ENCODE measurements at regions of chr5 and their contacts with region 1.

Region 1: DNA sequence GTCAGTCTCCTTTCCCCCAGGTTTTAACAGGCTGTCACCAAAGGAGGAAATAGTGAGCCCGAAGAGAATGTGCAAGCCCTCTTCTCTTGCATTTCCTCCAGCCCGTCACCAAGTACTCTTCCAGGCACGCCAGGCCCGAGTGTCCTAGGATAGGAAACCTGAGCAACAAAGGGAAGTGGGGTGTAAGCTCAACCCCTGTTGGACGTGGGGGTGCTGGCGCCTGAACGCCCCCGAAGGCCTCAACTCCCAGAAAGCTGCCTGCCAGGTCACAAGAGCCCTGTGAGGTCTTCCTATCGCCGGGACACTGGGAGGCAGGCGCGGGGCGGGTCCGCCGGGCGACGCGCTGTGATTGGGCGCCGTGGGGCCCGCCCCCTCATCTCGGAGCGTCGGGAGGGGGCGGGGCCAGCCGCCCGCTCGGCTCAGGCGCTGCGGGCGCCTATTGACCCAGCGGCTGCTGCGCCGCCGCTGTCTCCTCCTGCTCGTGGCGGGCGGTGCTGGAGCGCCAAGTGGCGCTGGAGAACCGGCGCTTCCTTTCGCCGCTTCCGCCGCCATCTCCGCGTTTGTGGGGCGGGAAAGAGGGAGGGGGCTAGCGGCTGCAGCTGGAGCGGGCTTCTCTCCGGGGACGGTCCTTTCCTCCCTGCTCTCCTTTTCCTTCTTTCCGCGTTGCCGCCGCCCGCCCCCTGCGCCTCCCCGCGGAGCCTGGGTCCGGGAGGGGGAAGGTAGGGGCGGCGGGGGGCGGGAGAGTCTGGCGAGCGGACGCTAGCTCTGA is 572 bp upstream of the MAN2A1 start:
- DNase-seq: peak; percentile 66 to 98 (median 84)

Region 2: DNA sequence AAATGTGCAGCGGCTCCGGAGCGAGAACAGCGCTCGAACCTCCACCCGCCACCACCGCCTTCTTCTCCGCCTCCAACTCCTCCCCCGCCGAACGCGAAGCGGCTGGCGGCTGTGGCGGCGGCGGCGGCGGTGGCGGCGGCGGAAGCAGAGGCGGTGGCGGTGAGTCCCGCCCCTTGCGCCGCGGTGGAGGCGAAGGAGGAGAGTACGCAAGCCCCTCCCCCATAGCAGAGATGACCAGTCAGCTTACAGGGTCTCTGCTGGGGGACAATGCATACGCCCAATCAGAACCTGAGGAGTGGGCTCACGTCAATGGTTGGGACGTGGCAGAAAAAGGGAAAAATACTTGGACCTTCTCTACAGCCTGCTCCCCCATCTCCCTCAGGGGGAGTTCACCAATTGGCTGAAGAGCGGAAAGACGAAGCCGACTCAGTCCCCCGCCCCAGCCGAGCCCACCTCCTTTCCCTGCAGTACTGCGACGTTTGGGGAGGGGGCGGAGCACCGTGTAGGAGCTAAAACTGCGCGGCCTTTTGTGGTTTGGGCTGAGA is 279.2 kb before region 1 on chr5 and contains the start of gene PJA2:
- intact Hi-C with region 1: loop called (anchors 1 kb)
- DNase-seq: peak; percentile 96 to 100 (median 97)

Region 3: GRCh38 chr5:109469896-109470662 is 219.1 kb before region 1 on chr5:
- intact Hi-C with region 1: loop called (anchors 5 kb)
- DNase-seq: no peak

Region 4: DNA sequence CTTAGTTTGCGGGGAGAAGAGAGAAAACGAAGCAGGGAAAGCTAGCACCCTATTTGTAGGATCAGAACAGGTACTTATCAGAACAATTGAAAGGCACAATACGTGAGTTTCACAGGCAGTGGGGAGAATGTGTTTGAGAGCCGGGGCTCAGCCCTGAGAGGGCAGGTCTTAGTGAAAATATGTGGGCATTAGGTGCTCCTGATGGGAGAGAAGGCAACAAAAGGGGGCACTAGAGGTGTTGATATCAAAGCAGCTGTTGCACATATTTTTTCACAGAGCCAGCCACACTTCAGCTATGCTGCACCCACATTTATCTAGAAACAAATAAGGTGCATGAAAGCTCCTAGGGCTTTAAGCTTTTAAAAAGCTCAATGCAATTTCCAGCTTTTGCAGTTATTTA is 99.2 kb before region 1 on chr5:
- intact Hi-C with region 1: loop called (anchors 10 kb)
- DNase-seq: no peak

Region 5: DNA sequence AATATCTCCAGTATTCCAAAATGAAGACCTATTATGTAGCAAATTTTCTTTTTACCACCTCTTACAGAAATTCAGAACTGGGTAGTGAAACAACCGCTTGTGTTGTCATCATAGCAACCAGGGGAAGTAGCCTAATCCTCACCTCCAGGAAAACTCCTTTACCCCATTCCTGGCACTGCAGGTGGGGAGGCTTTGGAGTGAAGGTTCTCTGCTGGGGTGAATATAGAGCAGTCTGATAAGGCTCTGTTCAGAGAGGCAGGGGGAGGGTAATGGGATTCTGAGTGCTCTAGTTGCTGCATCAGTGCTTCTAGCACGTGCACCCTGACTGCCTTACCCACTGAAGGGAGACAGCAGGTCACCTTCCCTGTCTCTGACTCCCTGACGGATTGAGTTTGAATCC is 116.7 kb after region 1 on chr5:
- intact Hi-C with region 1: loop called (anchors 10 kb)
- DNase-seq: no peak

Region 6: DNA sequence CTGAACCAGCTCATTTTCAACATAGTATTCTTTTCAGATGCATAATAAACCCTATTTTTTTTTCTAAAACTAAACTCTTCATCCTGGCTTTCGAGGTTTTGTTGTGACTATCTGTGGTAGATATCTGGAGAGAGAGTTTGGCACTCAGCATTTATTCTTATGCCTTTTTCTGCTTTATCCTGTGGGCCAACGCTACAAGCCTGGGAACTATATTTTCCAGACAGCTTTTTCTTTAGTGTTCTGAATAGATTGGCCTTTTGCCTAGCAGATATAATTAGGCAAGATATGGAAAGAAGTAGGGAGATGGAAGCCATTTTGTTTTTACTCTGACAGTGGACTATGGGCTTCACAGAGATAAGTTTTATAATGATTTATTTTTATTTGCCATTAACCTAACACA is 550.6 kb after region 1 on chr5:
- intact Hi-C with region 1: no loop called
- DNase-seq: no peak

Region 7: DNA sequence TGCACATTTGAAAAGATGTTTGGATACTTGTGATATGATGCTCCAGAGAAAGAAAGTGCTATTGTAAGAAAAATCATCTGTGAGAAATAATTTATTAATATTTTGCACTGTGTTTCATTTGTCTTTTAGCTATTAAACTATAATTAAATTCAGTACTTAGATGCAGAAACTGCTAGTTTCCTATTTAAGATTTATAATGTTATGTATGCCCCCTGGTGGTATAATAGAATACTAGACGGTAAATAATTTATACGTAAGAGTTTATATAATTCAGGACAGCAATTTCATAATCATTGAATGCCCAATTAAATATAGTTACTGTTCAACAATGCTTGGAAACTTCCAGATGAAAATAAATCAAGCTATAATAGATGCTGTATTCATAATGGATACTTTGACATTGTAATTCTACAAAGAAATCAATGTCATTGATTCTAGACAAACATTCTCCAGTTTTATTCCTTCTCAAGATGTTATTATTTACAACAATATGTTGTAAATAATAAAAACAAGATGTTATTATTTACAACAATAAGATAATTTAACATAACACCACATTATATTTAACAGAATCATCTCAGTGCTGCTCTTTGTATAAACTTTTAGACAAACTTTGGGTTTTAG is 936.3 kb after region 1 on chr5:
- intact Hi-C with region 1: loop called (anchors 10 kb)
- DNase-seq: no peak